ENCODE measurements at regions of chr7 and their contacts with region 1.

Region 1: GRCh38 chr7:28700790-28701203 is 257.3 kb downstream of the TRIL start:
- DNase-seq: peak; percentile 42
- H3K4me3 ChIP-seq: no peak overlapping the region
- H3K27ac ChIP-seq: no peak overlapping the region
- H3K4me1 ChIP-seq: peaks cover 36% of the 10 kb centered on the region
- H3K27me3 ChIP-seq: no peaks in the 10 kb centered on the region
- CTCF ChIP-seq: no peak

Region 2: DNA sequence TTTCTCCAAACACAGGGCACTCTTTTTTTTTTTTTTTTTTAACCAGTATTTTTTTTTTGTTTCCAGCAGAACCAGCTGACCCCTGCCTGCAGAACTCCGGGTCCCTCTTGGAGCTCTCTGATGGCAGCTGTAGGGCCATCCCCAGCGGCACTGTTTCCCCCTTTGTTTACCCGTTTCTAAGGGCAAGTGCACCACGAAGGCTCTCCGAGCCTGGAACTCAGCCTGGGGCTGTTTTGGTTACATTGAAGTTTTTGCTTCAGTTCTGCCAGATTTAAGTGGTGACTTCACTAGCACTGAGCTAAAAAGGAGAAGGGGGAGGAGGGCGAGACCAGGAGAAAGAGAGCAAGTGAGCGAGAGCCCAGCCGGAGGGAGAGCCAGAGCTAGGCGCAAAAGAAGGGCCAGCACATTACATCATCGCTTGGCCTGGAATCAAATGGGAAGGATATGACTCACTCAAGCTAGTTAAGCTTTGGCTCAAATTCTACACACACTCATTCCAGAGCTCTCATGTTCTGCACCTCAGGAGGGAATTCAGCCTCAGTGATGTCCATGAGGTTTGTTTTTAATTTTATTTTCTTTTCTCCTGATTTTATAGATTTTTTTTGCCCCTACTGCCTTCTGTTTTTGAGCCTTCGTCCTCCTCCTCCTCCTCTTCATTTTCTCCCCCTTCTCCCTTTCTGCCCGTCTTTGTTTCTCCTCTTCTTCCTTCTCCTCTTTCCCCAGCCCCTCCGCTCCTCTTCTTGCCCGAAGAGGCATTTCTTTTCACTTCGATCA is 15.0 kb before region 1 on chr7:
- CTCF ChIA-PET with region 1: no interaction called
- POLR2A ChIA-PET with region 1: interaction called, 15 read pairs
- intact Hi-C with region 1: no loop called
- DNase-seq: peak; percentile 97
- H3K4me3 ChIP-seq: peak overlapping the region; percentile 61
- H3K27ac ChIP-seq: peak overlapping the region; percentile 93
- H3K4me1 ChIP-seq: peaks cover 22% of the 10 kb centered on the region
- H3K27me3 ChIP-seq: no peaks in the 10 kb centered on the region
- CTCF ChIP-seq: no peak

Region 3: DNA sequence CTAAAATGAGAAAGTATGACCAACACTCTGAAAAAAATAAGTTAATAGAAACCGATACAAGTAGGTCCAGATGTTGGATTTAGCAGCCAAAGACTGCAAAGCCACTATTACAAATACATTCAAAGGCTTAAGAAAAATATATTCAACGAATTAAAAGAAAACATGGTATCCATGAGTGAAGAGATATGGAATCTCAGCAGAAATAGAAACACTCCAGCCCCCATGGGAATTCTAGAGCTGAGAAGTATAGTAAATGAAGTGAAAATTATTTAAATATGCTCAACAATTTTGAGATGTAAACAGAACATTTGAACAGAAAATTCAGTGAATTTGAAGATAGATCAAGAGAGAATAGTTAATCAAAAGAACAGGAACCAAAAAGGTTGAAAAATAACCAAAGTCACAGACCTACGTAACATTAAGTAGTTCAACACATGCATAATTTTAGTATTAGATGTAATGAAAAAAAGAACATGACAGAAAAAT is 1033.5 kb after region 1 on chr7:
- CTCF ChIA-PET with region 1: no interaction called
- POLR2A ChIA-PET with region 1: no interaction called
- intact Hi-C with region 1: no loop called
- DNase-seq: no peak
- H3K4me3 ChIP-seq: no peak overlapping the region
- H3K27ac ChIP-seq: no peak overlapping the region
- H3K4me1 ChIP-seq: no peaks in the 10 kb centered on the region
- H3K27me3 ChIP-seq: peaks cover 5% of the 10 kb centered on the region
- CTCF ChIP-seq: no peak